ENCODE measurements at regions of chr10 and their contacts with region 1.

Region 1: GRCh38 chr10:58781873-58782488 is 269.3 kb downstream of the BICC1 start:
- DNase-seq: no peak
- ATAC-seq: no peak

Region 2: DNA sequence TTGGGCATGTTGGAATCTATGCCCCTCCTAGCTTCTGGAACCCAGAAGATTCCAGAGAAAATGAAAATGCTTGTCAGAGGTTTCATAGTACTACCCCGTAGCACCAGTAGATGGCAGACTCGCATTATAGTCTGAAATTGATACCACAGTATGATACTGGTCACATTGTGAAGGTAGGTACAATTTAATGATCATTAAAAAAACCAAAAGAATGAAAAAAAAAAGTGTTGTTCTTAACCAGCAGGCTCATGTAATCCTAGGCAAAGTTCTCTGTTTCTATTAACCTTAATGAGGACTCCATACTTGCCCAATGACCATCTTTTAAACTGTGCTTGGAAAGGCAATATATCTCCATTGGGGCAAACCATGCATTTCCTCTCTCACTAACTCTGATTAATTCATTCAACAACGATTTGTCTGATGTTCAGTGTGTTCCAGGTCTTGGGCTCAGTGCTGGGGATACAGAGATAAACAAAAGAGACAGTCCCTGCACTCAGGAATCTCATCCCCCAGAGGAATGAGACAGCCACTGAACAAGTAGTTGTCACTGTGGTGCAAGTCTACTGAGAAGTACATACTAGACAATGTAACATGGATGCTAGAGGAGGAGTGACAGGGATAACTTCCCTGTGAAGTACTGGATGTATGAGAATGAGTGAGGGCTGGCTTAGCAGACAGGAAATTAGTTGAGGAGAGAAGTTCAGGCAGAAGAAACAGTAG is 170.9 kb after region 1 on chr10:
- intact Hi-C with region 1: loop called (anchors 5 kb)
- DNase-seq: no peak
- ATAC-seq: peak; percentile 72